ENCODE measurements at regions of chr4 and their contacts with region 1.

Region 1: GRCh38 chr4:3106339-3107186 is 32.1 kb downstream of the HTT start:
- DNase-seq: peak; percentile 79
- H3K4me3 Mint-ChIP-seq: no peak overlapping the region
- H3K27ac Mint-ChIP-seq: peak overlapping the region; percentile 11
- H3K4me1 Mint-ChIP-seq: peaks cover 24% of the 10 kb centered on the region
- H3K27me3 Mint-ChIP-seq: no peaks in the 10 kb centered on the region

Region 2: DNA sequence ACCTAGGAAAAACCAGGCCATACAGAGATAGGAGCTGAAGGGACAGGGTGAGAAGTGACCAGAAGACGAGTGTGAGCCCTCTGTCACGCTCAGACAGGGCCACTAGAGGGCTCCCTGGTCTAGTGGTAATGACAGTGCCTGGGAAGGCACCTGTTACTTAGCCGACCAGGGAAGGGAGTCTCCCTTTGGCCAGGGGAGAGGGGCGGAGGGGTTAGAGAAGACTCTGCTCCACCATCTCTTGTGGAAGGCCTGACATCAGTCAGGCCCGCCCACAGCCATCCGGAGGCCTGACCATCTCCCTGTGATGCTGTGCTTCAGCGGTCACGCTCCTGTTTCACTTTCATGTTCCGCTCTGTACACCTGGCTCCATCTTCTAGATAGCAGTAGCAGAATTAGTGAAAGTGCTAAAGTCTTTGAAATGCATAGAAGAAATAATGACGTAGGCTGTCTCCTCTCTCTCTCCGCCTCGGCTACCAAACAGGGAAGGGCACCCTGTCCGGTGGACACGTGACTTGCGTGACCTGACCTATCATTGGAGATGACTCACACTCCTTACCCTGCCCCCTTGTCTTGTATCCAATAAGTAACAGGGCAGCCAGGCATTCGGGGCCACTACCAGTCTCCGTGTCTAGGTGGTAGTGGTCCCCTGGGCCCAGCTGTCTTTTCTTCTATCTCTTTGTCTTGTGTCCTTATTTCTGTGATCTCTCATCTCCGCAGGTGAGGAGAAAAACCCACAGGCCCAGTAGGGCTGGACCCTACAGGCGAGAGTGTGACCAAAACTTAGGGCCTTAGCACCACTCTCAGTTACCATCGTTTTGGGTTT is 58.9 kb before region 1 on chr4:
- intact Hi-C with region 1: loop called (anchors 1 kb)
- DNase-seq: peak; percentile 80
- H3K4me3 Mint-ChIP-seq: peak overlapping the region; percentile 49
- H3K27ac Mint-ChIP-seq: peak overlapping the region; percentile 48
- H3K4me1 Mint-ChIP-seq: peaks cover 38% of the 10 kb centered on the region
- H3K27me3 Mint-ChIP-seq: peaks cover 26% of the 10 kb centered on the region

Region 3: DNA sequence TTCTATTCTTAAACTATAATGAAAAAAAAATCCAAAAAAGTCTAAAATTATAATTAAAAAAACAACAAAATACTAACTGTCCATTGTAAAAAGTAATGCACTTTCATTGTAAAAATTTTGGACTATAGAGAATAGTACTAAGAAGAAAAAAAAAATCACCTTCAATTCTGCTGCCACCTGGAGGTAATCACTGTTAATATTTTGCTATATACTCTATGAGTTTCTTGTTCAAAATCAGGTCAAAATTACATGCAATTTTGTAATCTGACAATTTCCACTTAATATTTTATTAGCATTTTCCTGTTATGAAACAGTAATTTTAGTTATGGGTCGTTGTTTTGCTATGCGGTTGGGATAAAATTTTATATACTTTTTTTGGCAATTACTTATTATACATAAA is 29.9 kb after region 1 on chr4:
- intact Hi-C with region 1: loop called (anchors 1 kb)
- DNase-seq: no peak
- H3K4me3 Mint-ChIP-seq: no peak overlapping the region
- H3K27ac Mint-ChIP-seq: no peak overlapping the region
- H3K4me1 Mint-ChIP-seq: no peaks in the 10 kb centered on the region
- H3K27me3 Mint-ChIP-seq: no peaks in the 10 kb centered on the region

Region 4: GRCh38 chr4:3292571-3293400 is 186.2 kb after region 1 on chr4 and contains the start of gene RGS12:
- intact Hi-C with region 1: loop called (anchors 2 kb)
- DNase-seq: peak; percentile 80
- H3K4me3 Mint-ChIP-seq: peak within 1 kb of the TSS; percentile 83
- H3K27ac Mint-ChIP-seq: peak within 1 kb of the TSS; percentile 72
- H3K4me1 Mint-ChIP-seq: peaks cover 6% of the 10 kb centered on the region
- H3K27me3 Mint-ChIP-seq: peaks cover 50% of the 10 kb centered on the region
- total RNA-seq, gene RGS12: 3.1 and 3.6 TPM in 2 replicates

Region 5: DNA sequence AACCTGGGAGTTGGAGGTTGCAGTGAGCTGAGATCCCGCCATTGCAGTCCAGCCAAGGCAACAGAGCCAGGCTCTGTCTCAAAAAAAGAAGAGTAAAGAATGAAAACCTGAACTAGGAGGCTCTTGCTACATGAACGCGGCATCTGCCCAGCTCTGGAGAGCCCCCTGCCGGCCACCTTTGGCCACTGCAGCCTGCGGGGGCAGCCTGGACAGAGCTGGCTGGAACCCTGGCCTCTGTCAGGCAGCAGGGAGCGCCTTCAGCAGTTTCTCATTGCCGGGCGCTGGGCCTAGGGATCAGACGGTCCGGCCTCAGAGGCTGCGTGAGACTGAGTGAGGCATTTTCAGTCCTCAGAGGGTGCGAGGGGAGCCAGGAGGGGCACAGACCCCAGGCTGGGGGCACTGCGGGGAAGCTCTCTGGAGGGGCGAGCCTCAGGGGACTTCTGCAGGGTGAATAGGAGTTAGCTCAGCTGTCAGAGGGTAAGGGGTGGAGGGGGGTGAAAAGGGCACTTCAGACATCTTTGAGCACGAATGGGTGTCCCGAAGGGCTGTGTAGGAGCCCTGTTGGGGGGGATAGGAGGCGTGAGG is 374.1 kb after region 1 on chr4:
- intact Hi-C with region 1: loop called (anchors 1 kb)
- DNase-seq: peak; percentile 61
- H3K4me3 Mint-ChIP-seq: no peak overlapping the region
- H3K27ac Mint-ChIP-seq: no peak overlapping the region
- H3K4me1 Mint-ChIP-seq: no peaks in the 10 kb centered on the region
- H3K27me3 Mint-ChIP-seq: peaks cover 8% of the 10 kb centered on the region

Measured in activated T-helper 1 cell treated with anti-CD3 and anti-CD28 coated beads, Interleukin-12 subunit alpha, Interleukin-12 subunit beta, Interleukin-2, Interleukin-4 antibody, amounts not matched to agents 30 ng/mL and 10 ng/mL and 1 ng/mL, durations not matched to agents 14 hours and 24 hours and 36 hours (primary cell).